ENCODE measurements at regions of chr19 and their contacts with region 1.

Region 1: GRCh38 chr19:6264803-6265202 is 15.0 kb downstream of the MLLT1 start:
- DNase-seq: no peak
- ATAC-seq: no peak
- H3K4me3 Mint-ChIP-seq: no peak overlapping the region
- H3K27ac Mint-ChIP-seq: peak overlapping the region in 2 of 10 donors; percentile 25 to 93
- H3K4me1 Mint-ChIP-seq: peaks cover 10 to 51% (median 25%) of the 10 kb centered on the region in 4 donors
- H3K27me3 Mint-ChIP-seq: no peaks in the 10 kb centered on the region

Region 2: DNA sequence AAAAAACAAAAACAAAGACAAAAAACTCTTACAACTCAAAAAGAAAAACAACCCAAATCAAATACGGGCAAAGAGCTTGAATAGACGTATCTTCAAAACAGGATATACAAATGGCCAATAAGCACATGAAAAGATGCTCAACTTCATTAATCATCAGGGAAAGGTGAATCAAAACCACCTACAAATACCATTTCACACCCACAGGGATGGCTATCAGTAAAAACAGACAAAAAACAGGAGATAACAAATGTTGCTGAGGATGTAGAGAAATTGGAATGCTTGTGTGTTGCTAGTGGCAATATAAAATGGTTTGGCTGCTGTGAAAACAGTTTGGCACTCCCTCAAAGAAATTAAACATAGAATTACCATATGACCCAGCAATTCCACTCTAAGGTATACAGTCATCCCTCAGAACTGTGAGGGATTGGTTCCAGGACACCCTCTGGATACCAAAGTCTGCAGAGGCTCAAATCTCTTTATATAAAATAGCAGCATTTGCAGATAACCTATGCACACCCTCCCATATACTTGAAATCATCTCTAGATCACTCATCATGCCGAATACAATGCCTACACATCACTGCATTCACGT is 14.7 kb before region 1 on chr19:
- POLR2A ChIA-PET with region 1: interaction called, 10 read pairs
- DNase-seq: no peak
- ATAC-seq: no peak
- H3K4me3 Mint-ChIP-seq: no peak overlapping the region
- H3K27ac Mint-ChIP-seq: peak overlapping the region in 3 of 10 donors; percentile 12 to 28 (median 15)
- H3K4me1 Mint-ChIP-seq: peaks cover 25 to 59% (median 42%) of the 10 kb centered on the region in 4 donors
- H3K27me3 Mint-ChIP-seq: no peaks in the 10 kb centered on the region

Measured in naive thymus-derived CD8-positive, alpha-beta T cell (primary cell).